ENCODE measurements at regions of chr5 and their contacts with region 1.

Region 1: DNA sequence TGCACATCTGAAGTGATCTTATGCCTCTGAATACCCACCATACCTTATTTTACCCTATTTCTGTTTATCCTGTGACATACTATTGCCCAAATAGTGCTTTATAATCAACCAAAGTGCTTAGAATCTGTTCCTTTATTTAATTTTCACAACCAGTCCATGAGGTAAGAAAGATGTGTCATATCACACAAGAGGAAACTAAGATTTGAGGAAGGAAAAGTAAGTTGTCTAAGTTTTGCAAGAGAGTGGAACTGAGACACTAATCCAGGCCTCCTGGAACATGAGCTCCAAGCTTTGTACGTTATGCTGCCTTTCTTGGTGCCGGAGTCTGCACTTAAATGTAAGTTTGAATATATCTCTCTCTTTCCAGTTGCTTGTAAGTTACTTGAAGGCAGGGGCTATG is 17.2 kb downstream of the KDM3B start:
- DNase-seq: no peak
- ATAC-seq: no peak
- H3K4me3 ChIP-seq: no peak overlapping the region
- H3K27ac ChIP-seq: no peak overlapping the region
- H3K4me1 ChIP-seq: peaks cover 4% of the 10 kb centered on the region; the same call in 1 of the 2 replicates
- H3K27me3 ChIP-seq: no peaks in the 10 kb centered on the region
- CTCF ChIP-seq: no peak
- POLR2A ChIP-seq: no peak
- RAD21 ChIP-seq: no peak

Region 2: GRCh38 chr5:137822158-137822764 is 547.4 kb before region 1 on chr5:
- CTCF ChIA-PET with region 1: no interaction called
- POLR2A ChIA-PET with region 1: no interaction called
- dilution Hi-C with region 1: no loop called
- in situ Hi-C with region 1: no loop called
- intact Hi-C with region 1: no loop called
- DNase-seq: peak; percentile 18
- ATAC-seq: peak; percentile 57
- H3K4me3 ChIP-seq: no peak overlapping the region
- H3K27ac ChIP-seq: no peak overlapping the region
- H3K4me1 ChIP-seq: no peaks in the 10 kb centered on the region
- H3K27me3 ChIP-seq: peaks cover 6% of the 10 kb centered on the region
- CTCF ChIP-seq: peak; percentile 45
- POLR2A ChIP-seq: no peak
- RAD21 ChIP-seq: peak; percentile 51

Region 3: GRCh38 chr5:138402640-138403039 is 32.9 kb after region 1 on chr5:
- CTCF ChIA-PET with region 1: no interaction called
- POLR2A ChIA-PET with region 1: no interaction called
- dilution Hi-C with region 1: no loop called
- in situ Hi-C with region 1: no loop called
- intact Hi-C with region 1: loop called (anchors 5 kb)
- DNase-seq: no peak
- ATAC-seq: no peak
- H3K4me3 ChIP-seq: no peak overlapping the region
- H3K27ac ChIP-seq: no peak overlapping the region
- H3K4me1 ChIP-seq: no peaks in the 10 kb centered on the region
- H3K27me3 ChIP-seq: no peaks in the 10 kb centered on the region
- CTCF ChIP-seq: no peak
- POLR2A ChIP-seq: no peak
- RAD21 ChIP-seq: no peak

Region 4: GRCh38 chr5:138503487-138504270 is 134.0 kb after region 1 on chr5:
- CTCF ChIA-PET with region 1: no interaction called
- POLR2A ChIA-PET with region 1: no interaction called
- dilution Hi-C with region 1: no loop called
- in situ Hi-C with region 1: no loop called
- intact Hi-C with region 1: no loop called
- DNase-seq: peak; percentile 75
- ATAC-seq: peak; percentile 77
- H3K4me3 ChIP-seq: no peak overlapping the region
- H3K27ac ChIP-seq: no peak overlapping the region
- H3K4me1 ChIP-seq: peaks cover 8% of the 10 kb centered on the region
- H3K27me3 ChIP-seq: no peaks in the 10 kb centered on the region
- CTCF ChIP-seq: peak; percentile 77
- POLR2A ChIP-seq: no peak
- RAD21 ChIP-seq: peak; percentile 76

Region 5: GRCh38 chr5:139027150-139027549 is 657.4 kb after region 1 on chr5:
- CTCF ChIA-PET with region 1: no interaction called
- POLR2A ChIA-PET with region 1: no interaction called
- dilution Hi-C with region 1: no loop called
- in situ Hi-C with region 1: no loop called
- intact Hi-C with region 1: no loop called
- DNase-seq: no peak
- ATAC-seq: no peak
- H3K4me3 ChIP-seq: no peak overlapping the region
- H3K27ac ChIP-seq: no peak overlapping the region
- H3K4me1 ChIP-seq: no peaks in the 10 kb centered on the region
- H3K27me3 ChIP-seq: no peaks in the 10 kb centered on the region
- CTCF ChIP-seq: no peak
- POLR2A ChIP-seq: no peak
- RAD21 ChIP-seq: no peak

Measured in IMR-90 (cell line).